GM10248 (cell line): ENCODE measurements at regions of chrX and their contacts with region 1.

Region 1: DNA sequence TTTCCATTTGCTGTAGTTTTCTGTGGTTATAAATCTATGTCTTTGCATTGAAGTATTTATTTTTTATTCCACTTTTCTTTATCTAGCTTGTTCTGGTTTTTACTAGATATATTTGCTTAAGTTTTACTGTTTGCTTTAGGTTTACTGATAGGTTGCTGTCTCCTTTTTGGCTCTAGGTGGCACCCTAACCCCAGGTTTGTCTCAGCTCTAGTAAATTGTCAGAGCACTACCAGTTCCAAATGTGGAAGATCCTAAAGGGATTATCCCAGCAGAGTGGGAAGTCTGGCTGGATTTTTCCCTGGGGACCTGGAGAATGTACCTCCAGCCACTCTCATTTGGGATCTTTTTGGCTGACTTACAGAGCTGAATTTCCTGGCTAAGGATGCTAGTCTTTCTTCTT is 106.1 kb downstream of the PBDC1 start:
- DNase-seq: peak; percentile 32
- CTCF ChIP-seq: peak; percentile 53

Region 2: DNA sequence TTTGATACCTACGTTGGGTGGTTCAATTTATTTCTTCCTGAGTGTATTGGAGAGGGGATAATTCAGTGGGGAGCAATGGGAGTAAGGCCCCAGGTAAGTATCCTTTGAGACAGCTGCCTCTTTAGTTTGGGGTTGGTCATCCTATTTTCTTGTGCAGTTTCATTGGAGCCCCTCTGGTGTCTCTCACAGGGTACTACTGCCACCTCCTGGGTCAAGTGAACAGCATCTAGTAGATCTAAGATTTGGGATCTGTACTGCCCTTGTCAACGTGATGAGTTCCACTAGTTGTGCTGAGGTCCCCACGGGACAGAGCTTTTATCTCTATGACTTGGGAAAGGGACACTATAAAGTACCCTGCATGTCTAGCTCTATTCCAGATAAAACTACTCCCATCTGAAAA is 25.6 kb before region 1 on chrX:
- CTCF ChIA-PET with region 1: no interaction called
- POLR2A ChIA-PET with region 1: no interaction called
- DNase-seq: peak; percentile 31
- CTCF ChIP-seq: peak; percentile 48

Region 3: GRCh38 chrX:76454456-76454927 is 175.5 kb after region 1 on chrX:
- CTCF ChIA-PET with region 1: interaction called, 30 read pairs
- POLR2A ChIA-PET with region 1: no interaction called
- DNase-seq: no peak
- CTCF ChIP-seq: peak; percentile 49